Ovary (tissue), 10 donors: ENCODE measurements at regions of chr14 and their contacts with region 1.

Region 1: GRCh38 chr14:47300796-47301195 is 374.6 kb downstream of the MDGA2 start:
- DNase-seq: no peak
- H3K4me3 ChIP-seq: no peak overlapping the region
- H3K27ac ChIP-seq: no peak overlapping the region
- H3K4me1 ChIP-seq: no peaks in the 10 kb centered on the region
- H3K27me3 ChIP-seq: no peaks in the 10 kb centered on the region
- CTCF ChIP-seq: no peak
- EP300 ChIP-seq: no peak
- POLR2A ChIP-seq: no peak

Region 2: DNA sequence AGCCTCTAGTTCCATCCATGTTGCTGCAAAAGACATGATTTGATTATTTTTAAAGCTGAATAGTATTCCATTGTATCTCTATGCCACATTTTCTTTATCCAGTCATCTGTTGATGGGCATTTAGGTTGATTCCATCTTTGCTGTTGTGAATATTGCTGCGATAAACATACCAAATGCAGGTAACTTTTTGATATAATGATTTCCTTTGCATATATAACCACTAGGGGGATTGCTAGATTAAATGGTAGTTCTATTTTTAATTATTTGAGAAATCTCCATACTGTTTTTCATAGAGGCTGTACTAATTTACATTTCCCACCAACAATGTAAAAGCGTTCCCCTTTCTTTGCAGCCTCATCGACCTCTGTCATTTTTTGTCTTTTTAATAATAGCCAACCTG is 32.1 kb after region 1 on chr14:
- intact Hi-C with region 1: no loop called
- DNase-seq: no peak
- H3K4me3 ChIP-seq: no peak overlapping the region
- H3K27ac ChIP-seq: no peak overlapping the region
- H3K4me1 ChIP-seq: no peaks in the 10 kb centered on the region
- H3K27me3 ChIP-seq: no peaks in the 10 kb centered on the region
- CTCF ChIP-seq: no peak
- EP300 ChIP-seq: no peak
- POLR2A ChIP-seq: no peak

Region 3: GRCh38 chr14:47346849-47347248 is 46.1 kb after region 1 on chr14:
- intact Hi-C with region 1: no loop called
- DNase-seq: no peak
- H3K4me3 ChIP-seq: no peak overlapping the region
- H3K27ac ChIP-seq: no peak overlapping the region
- H3K4me1 ChIP-seq: no peaks in the 10 kb centered on the region
- H3K27me3 ChIP-seq: no peaks in the 10 kb centered on the region
- CTCF ChIP-seq: no peak
- EP300 ChIP-seq: no peak
- POLR2A ChIP-seq: no peak

Region 4: GRCh38 chr14:47466916-47467315 is 166.1 kb after region 1 on chr14:
- intact Hi-C with region 1: loop called in 1 of 4 experiments (anchors 5 kb)
- DNase-seq: no peak
- H3K4me3 ChIP-seq: no peak overlapping the region
- H3K27ac ChIP-seq: no peak overlapping the region
- H3K4me1 ChIP-seq: no peaks in the 10 kb centered on the region
- H3K27me3 ChIP-seq: no peaks in the 10 kb centered on the region
- CTCF ChIP-seq: no peak
- EP300 ChIP-seq: no peak
- POLR2A ChIP-seq: no peak

Region 5: DNA sequence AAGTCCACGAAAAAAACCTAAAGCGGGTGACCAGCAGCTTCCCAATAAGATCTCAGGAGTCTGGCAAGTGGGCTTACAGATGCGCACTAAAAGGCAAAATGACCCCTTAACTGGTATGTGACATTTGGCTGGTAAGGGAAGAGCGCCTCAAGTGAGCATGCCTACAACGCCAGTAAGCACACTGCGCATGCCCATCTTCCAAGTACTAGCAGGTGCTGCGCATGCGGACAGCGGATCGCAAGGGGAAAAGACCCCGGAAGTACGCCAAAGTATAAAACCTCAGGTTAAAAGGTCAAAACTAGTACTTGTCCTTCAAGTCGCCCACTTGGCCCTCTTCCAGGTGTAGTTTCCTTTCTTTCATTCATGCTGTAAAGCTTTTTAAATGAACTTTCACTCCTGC is 893.1 kb after region 1 on chr14:
- intact Hi-C with region 1: no loop called
- DNase-seq: no peak
- H3K4me3 ChIP-seq: no peak overlapping the region
- H3K27ac ChIP-seq: no peak overlapping the region
- H3K4me1 ChIP-seq: no peaks in the 10 kb centered on the region
- H3K27me3 ChIP-seq: no peaks in the 10 kb centered on the region
- CTCF ChIP-seq: no peak
- EP300 ChIP-seq: no peak
- POLR2A ChIP-seq: no peak